ENCODE measurements at regions of chrX and their contacts with region 1.

Region 1: GRCh38 chrX:153564051-153564736 is 34.7 kb downstream of the CCNQ start:
- H3K4me3 ChIP-seq: no peak overlapping the region
- H3K27ac ChIP-seq: no peak overlapping the region
- H3K4me1 ChIP-seq: no peaks in the 10 kb centered on the region
- CTCF ChIP-seq: no peak

Region 2: GRCh38 chrX:153470435-153471363 is 93.5 kb before region 1 on chrX and contains the start of gene HAUS7:
- CTCF ChIA-PET with region 1: no interaction called
- POLR2A ChIA-PET with region 1: no interaction called
- H3K4me3 ChIP-seq: peak within 1 kb of the TSS; percentile 67
- H3K27ac ChIP-seq: peak within 1 kb of the TSS; percentile 55; the same call in 1 of the 2 replicates
- H3K4me1 ChIP-seq: no peaks in the 10 kb centered on the region
- CTCF ChIP-seq: peak; percentile 97

Region 3: DNA sequence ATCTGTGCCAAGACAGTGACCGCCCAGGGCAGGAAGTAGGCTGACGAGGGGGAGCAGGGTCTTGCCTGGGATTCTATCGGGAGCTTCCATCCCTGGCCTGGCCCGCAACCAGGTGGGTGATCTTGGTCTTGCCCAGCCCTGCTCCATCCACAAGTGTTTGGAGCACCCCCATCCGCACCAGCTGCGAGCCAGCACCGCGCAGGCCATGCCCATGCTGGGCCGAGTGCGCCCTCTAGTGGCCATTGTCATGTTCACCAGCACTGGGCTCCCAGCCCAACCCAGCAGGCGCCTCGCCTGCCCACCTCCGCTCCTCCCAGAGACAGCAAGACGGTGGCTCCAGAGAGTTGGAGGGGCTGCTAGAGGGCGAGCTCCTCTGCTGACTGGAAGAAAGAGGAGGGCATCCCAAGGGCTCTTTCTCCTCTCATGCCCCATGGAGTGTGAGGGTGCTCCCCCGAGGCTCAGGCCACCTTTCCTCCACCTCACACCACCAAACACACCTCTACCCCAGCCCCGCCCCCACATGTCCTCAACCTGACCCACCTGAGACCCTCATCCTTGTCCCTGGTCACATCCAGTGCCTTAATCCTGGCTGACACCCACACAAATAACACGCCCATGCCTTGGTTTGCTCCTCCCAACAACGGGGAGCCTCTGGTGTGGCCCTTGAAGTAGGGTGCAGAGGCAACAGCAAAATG is 56.6 kb before region 1 on chrX:
- CTCF ChIA-PET with region 1: no interaction called
- POLR2A ChIA-PET with region 1: no interaction called
- H3K4me3 ChIP-seq: no peak overlapping the region
- H3K27ac ChIP-seq: no peak overlapping the region
- H3K4me1 ChIP-seq: no peaks in the 10 kb centered on the region
- CTCF ChIP-seq: peak; percentile 97

Region 4: GRCh38 chrX:153539171-153539978 is 24.8 kb before region 1 on chrX:
- CTCF ChIA-PET with region 1: interaction called, 14 read pairs
- POLR2A ChIA-PET with region 1: no interaction called
- H3K4me3 ChIP-seq: no peak overlapping the region
- H3K27ac ChIP-seq: no peak overlapping the region
- H3K4me1 ChIP-seq: no peaks in the 10 kb centered on the region
- CTCF ChIP-seq: peak; percentile 99

Measured in HEK293 (cell line).